HCT116 (cell line): ENCODE measurements at regions of chr9 and their contacts with region 1.

Region 1: DNA sequence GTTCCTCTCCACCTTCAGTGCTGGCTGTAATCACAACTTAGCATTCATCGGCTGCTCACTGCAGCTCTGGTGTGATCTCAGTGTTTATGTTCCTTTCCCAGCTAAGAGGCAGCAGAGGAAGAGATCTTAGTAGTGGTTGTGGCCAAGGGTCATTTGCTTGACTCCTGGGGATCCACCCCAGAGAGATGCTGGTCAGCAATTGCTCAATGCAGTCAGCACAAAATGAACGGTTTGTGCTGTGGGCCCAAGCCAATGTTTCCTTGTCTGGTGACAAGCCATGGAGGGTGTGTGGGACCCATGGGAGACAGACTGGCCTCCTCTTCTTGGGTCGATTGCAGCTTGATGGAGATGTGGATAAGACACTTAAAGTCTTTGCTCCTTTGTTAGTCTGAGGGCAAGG is 16.1 kb upstream of the FRMD3 start:
- DNase-seq: no peak
- ATAC-seq: no peak
- H3K4me3 ChIP-seq: no peak overlapping the region
- H3K27ac ChIP-seq: no peak overlapping the region
- H3K4me1 ChIP-seq: no peaks in the 10 kb centered on the region
- H3K27me3 ChIP-seq: no peaks in the 10 kb centered on the region
- CTCF ChIP-seq: no peak
- POLR2A ChIP-seq: no peak
- RAD21 ChIP-seq: no peak

Region 2: GRCh38 chr9:83596896-83597504 is 42.7 kb after region 1 on chr9:
- CTCF ChIA-PET with region 1: no interaction called
- POLR2A ChIA-PET with region 1: no interaction called
- RAD21 ChIA-PET with region 1: no interaction called
- intact Hi-C with region 1: loop called (anchors 5 kb)
- DNase-seq: peak; percentile 27
- ATAC-seq: peak; percentile 81
- H3K4me3 ChIP-seq: no peak overlapping the region
- H3K27ac ChIP-seq: no peak overlapping the region
- H3K4me1 ChIP-seq: no peaks in the 10 kb centered on the region
- H3K27me3 ChIP-seq: no peaks in the 10 kb centered on the region
- CTCF ChIP-seq: peak; percentile 48 to 86 (median 81); a peak in 5 of 6 replicates
- POLR2A ChIP-seq: no peak
- RAD21 ChIP-seq: peak; percentile 71